Heart left ventricle (tissue), 16 donors: ENCODE measurements at regions of chrX and their contacts with region 1.

Region 1: DNA sequence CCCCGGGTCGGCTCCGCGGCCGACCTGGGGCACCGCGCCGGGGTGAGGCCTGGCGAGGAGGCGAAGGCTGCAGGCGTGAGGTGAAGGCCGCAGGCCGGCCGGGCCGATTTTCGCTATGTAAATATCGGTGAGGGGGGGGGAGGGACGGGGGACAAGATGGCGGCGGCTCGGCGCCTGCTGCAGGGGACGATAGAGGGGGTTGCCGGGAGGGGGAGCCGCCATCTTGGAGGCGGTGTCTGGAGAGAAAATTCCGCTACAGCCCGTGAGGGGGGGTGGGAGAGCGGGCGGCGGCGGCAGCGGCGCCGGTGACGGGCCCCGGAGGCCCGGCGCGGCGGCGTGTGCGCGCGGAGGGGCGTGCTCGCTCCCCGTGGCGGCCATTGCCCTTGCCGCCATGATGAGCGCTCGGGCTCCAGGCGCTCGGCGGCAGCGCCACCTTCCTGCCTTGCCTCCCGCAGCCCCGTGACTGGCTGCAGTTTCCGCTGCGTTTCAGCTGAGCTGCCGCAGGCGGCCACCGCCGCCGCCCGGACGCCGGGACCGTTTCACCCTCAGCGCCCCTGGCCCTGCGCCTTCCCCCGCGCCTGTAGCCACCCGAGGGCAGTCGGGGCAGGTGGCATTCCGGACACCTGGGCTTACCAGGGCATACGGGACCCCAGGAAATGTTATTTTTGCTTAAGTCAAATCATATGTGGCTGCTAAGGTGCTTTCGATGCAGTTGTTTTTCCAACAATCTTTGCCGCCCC is 692 bp downstream of the ZFX start:
- DNase-seq: peak; percentile 86 to 95 (median 89)
- ATAC-seq: peak; percentile 81 to 94 (median 90)
- H3K4me3 ChIP-seq: peak overlapping the region; percentile 55 to 97 (median 78)
- H3K27ac ChIP-seq: peak overlapping the region; percentile 92 to 99 (median 98)
- H3K4me1 ChIP-seq: peaks cover 0 to 77% (median 54%) of the 10 kb centered on the region in 12 donors
- H3K27me3 ChIP-seq: no peaks in the 10 kb centered on the region
- CTCF ChIP-seq: peak; percentile 11 to 63 (median 43)
- POLR2A ChIP-seq: peak in 1 of 2 donors; percentile 26

Region 2: GRCh38 chrX:23589496-23589895 is 560.7 kb before region 1 on chrX:
- intact Hi-C with region 1: no loop called
- DNase-seq: no peak
- ATAC-seq: no peak
- H3K4me3 ChIP-seq: no peak overlapping the region
- H3K27ac ChIP-seq: no peak overlapping the region
- H3K4me1 ChIP-seq: no peaks in the 10 kb centered on the region
- H3K27me3 ChIP-seq: peaks cover 0 to 6% (median 0%) of the 10 kb centered on the region in 9 donors
- CTCF ChIP-seq: no peak
- POLR2A ChIP-seq: no peak

Region 3: GRCh38 chrX:24054182-24055042 is 95.8 kb before region 1 on chrX and contains the start of gene EIF2S3:
- intact Hi-C with region 1: loop called in 2 of 10 experiments (anchors 1 to 10 kb)
- DNase-seq: peak; percentile 86 to 93 (median 87)
- ATAC-seq: peak; percentile 97 to 99 (median 98)
- H3K4me3 ChIP-seq: peak within 1 kb of the TSS in 6 of 12 donors; percentile 57 to 86 (median 77)
- H3K27ac ChIP-seq: peak within 1 kb of the TSS; percentile 88 to 98 (median 93)
- H3K4me1 ChIP-seq: peaks cover 0 to 11% (median 0%) of the 10 kb centered on the region in 12 donors
- H3K27me3 ChIP-seq: peaks cover 0 to 5% (median 0%) of the 10 kb centered on the region in 9 donors
- CTCF ChIP-seq: peak; percentile 47 to 89 (median 72)
- POLR2A ChIP-seq: peak in 1 of 2 donors; percentile 13
- total RNA-seq, gene EIF2S3: 60.0 to 126 (median 83.0) TPM

Region 4: GRCh38 chrX:24081661-24082264 is 68.5 kb before region 1 on chrX:
- intact Hi-C with region 1: loop called in 1 of 10 experiments (anchors 10 kb)
- DNase-seq: peak; percentile 32 to 69 (median 49)
- ATAC-seq: peak; percentile 20 to 79 (median 64)
- H3K4me3 ChIP-seq: no peak overlapping the region
- H3K27ac ChIP-seq: no peak overlapping the region
- H3K4me1 ChIP-seq: no peaks in the 10 kb centered on the region
- H3K27me3 ChIP-seq: peaks cover 0 to 8% (median 0%) of the 10 kb centered on the region in 9 donors
- CTCF ChIP-seq: peak in 11 of 12 donors; percentile 22 to 56 (median 43)
- POLR2A ChIP-seq: no peak

Region 5: GRCh38 chrX:24204331-24204730 is 54.1 kb after region 1 on chrX:
- intact Hi-C with region 1: loop called in 1 of 10 experiments (anchors 10 kb)
- DNase-seq: no peak
- ATAC-seq: no peak
- H3K4me3 ChIP-seq: no peak overlapping the region
- H3K27ac ChIP-seq: no peak overlapping the region
- H3K4me1 ChIP-seq: peaks cover 0 to 44% (median 16%) of the 10 kb centered on the region in 12 donors
- H3K27me3 ChIP-seq: no peaks in the 10 kb centered on the region
- CTCF ChIP-seq: no peak
- POLR2A ChIP-seq: no peak

Region 6: GRCh38 chrX:24241822-24242648 is 91.8 kb after region 1 on chrX:
- intact Hi-C with region 1: loop called in 1 of 10 experiments (anchors 5 kb)
- DNase-seq: peak in 3 of 5 donors; percentile 19 to 38 (median 33)
- ATAC-seq: peak; percentile 38 to 63 (median 58)
- H3K4me3 ChIP-seq: no peak overlapping the region
- H3K27ac ChIP-seq: peak overlapping the region in 3 of 12 donors; percentile 17 to 50 (median 24)
- H3K4me1 ChIP-seq: no peaks in the 10 kb centered on the region
- H3K27me3 ChIP-seq: peaks cover 0 to 6% (median 0%) of the 10 kb centered on the region in 9 donors
- CTCF ChIP-seq: peak; percentile 24 to 57 (median 36)
- POLR2A ChIP-seq: no peak